BJ (cell line): ENCODE measurements at regions of chr2 and their contacts with region 1.

Region 1: GRCh38 chr2:226799181-226799975 is at the start of gene IRS1:
- DNase-seq: no peak
- H3K4me3 ChIP-seq: peak within 1 kb of the TSS; percentile 99
- H3K27me3 ChIP-seq: no peaks in the 10 kb centered on the region
- CTCF ChIP-seq: peak; percentile 1; the same call in 1 of the 2 replicates
- polyA plus RNA-seq, gene IRS1: 12.4 and 13.0 TPM in 2 replicates

Region 2: GRCh38 chr2:225668606-225669266 is 1130.6 kb before region 1 on chr2:
- CTCF ChIA-PET with region 1: interaction called, 15 read pairs
- POLR2A ChIA-PET with region 1: no interaction called
- DNase-seq: peak; percentile 24
- H3K4me3 ChIP-seq: no peak overlapping the region
- H3K27me3 ChIP-seq: no peaks in the 10 kb centered on the region
- CTCF ChIP-seq: peak; percentile 83

Region 3: GRCh38 chr2:226215902-226216503 is 583.4 kb before region 1 on chr2:
- CTCF ChIA-PET with region 1: interaction called, 12 read pairs
- POLR2A ChIA-PET with region 1: interaction called, 3 read pairs
- DNase-seq: no peak
- H3K4me3 ChIP-seq: no peak overlapping the region
- H3K27me3 ChIP-seq: no peaks in the 10 kb centered on the region
- CTCF ChIP-seq: peak; percentile 68

Region 4: DNA sequence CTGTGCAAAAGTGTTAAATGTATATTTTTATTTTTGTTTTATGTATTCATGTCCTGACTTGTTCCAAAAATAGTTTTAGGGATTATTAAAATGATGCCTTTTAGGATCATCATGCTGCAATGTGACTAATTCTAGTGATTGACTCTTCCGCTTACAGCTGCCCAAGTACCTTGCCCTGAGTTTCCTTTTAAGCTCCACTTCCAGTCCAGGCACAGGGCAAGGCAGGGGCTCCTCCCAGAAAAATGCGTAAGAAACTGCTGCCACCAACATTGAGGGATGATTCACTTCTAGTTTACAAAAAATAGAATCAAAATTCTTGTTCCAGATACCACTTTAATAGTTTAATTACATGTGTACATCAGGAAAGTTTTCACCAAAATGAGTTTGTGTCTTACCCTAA is 116.2 kb before region 1 on chr2:
- CTCF ChIA-PET with region 1: no interaction called
- POLR2A ChIA-PET with region 1: no interaction called
- DNase-seq: no peak
- H3K4me3 ChIP-seq: no peak overlapping the region
- H3K27me3 ChIP-seq: no peaks in the 10 kb centered on the region
- CTCF ChIP-seq: no peak

Region 5: GRCh38 chr2:226782092-226782713 is 17.2 kb before region 1 on chr2:
- CTCF ChIA-PET with region 1: no interaction called
- POLR2A ChIA-PET with region 1: no interaction called
- DNase-seq: no peak
- H3K4me3 ChIP-seq: no peak overlapping the region
- H3K27me3 ChIP-seq: no peaks in the 10 kb centered on the region
- CTCF ChIP-seq: no peak

Region 6: GRCh38 chr2:226953206-226953605 is 153.8 kb after region 1 on chr2:
- CTCF ChIA-PET with region 1: no interaction called
- POLR2A ChIA-PET with region 1: no interaction called
- DNase-seq: peak; percentile 50
- H3K4me3 ChIP-seq: no peak overlapping the region
- H3K27me3 ChIP-seq: no peaks in the 10 kb centered on the region
- CTCF ChIP-seq: no peak

Region 7: GRCh38 chr2:226979004-226979403 is 179.6 kb after region 1 on chr2:
- CTCF ChIA-PET with region 1: interaction called, 30 read pairs
- POLR2A ChIA-PET with region 1: interaction called, 16 read pairs
- DNase-seq: no peak
- H3K4me3 ChIP-seq: no peak overlapping the region
- H3K27me3 ChIP-seq: no peaks in the 10 kb centered on the region
- CTCF ChIP-seq: no peak

Region 8: GRCh38 chr2:226984750-226985582 is 185.6 kb after region 1 on chr2:
- CTCF ChIA-PET with region 1: interaction called, 30 read pairs
- POLR2A ChIA-PET with region 1: no interaction called
- DNase-seq: peak; percentile 38
- H3K4me3 ChIP-seq: no peak overlapping the region
- H3K27me3 ChIP-seq: no peaks in the 10 kb centered on the region
- CTCF ChIP-seq: peak; percentile 65